Activated CD4-positive, alpha-beta T cell treated with anti-CD3 and anti-CD28 coated beads, Interleukin-2, amount 10 ng/mL, durations not matched to agents 24 days and 14 days (primary cell): ENCODE measurements at regions of chr5 and their contacts with region 1.

Region 1: GRCh38 chr5:159412284-159413046 is 82.2 kb upstream of the IL12B start:
- DNase-seq: peak; percentile 94
- H3K4me3 Mint-ChIP-seq: peak overlapping the region; percentile 46
- H3K27ac Mint-ChIP-seq: peak overlapping the region; percentile 82
- H3K4me1 Mint-ChIP-seq: peaks cover 58% of the 10 kb centered on the region
- H3K27me3 Mint-ChIP-seq: peaks cover 12% of the 10 kb centered on the region

Region 2: GRCh38 chr5:159163027-159163700 is 249.3 kb before region 1 on chr5:
- intact Hi-C with region 1: loop called (anchors 5 kb)
- DNase-seq: no peak
- H3K4me3 Mint-ChIP-seq: peak overlapping the region; percentile 6
- H3K27ac Mint-ChIP-seq: peak overlapping the region; percentile 74
- H3K4me1 Mint-ChIP-seq: peaks cover 43% of the 10 kb centered on the region
- H3K27me3 Mint-ChIP-seq: no peaks in the 10 kb centered on the region

Region 3: DNA sequence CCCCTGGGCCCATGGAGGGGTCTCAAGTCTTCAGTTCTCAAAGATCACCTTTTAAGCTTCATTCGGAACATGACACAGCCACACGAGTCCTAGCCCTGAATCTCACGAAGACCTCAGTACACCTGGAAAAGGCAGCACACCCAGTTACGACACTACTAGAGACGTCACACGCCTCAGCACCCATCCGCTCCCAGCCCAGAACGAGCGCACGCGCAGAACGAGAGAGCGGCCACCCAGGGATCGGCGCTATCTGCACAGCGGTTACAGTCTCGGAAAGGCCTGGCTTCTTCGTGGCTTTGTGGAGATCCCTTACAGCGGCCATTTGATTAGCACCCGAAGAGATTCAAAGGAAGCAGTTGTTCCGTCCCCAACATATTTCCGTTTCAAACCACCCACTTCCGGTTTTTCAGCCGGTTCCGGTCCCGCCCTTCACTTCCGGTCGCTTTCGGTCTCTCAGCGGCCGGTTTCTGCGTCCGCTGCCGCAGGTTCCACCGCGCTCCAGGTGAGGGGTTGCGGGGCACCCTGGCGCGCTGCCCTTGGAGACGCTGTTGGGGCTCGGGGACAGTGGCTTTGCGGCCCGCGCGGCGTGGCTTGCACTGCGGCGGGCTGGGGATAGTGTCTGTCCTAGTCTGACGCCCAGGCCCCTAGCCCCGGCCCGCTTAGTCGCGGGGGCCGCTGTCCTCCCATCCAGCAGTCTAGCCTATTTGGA is 149.5 kb before region 1 on chr5 and contains the start of gene UBLCP1:
- intact Hi-C with region 1: loop called (anchors 5 kb)
- DNase-seq: peak; percentile 92
- H3K4me3 Mint-ChIP-seq: peak within 1 kb of the TSS; percentile 92
- H3K27ac Mint-ChIP-seq: peak within 1 kb of the TSS; percentile 97
- H3K4me1 Mint-ChIP-seq: peaks cover 24% of the 10 kb centered on the region
- H3K27me3 Mint-ChIP-seq: peaks cover 3% of the 10 kb centered on the region
- total RNA-seq, gene UBLCP1: 30.2 and 31.2 TPM in 2 replicates

Region 4: DNA sequence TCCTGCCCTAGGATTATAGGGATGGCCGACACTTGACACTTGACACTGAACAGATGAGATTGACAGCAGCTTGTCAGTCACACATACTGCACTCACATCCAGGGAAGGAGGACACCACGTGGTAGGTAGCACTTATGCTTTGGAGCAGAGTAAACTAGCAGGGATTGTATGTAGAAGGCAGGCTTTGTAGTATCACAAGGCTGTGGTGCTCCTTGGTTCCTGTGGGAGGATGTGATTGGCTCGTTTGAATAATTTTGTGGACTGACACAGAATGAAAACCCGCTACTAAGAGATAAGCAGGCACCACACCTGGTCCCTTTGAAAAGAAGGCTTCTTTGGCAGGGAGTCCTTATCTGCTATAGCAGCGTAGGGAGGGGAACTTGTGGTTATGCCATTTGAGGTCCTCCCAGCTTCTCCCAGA is 18.6 kb before region 1 on chr5:
- intact Hi-C with region 1: no loop called
- DNase-seq: no peak
- H3K4me3 Mint-ChIP-seq: no peak overlapping the region
- H3K27ac Mint-ChIP-seq: no peak overlapping the region
- H3K4me1 Mint-ChIP-seq: peaks cover 4% of the 10 kb centered on the region
- H3K27me3 Mint-ChIP-seq: peaks cover 31% of the 10 kb centered on the region

Region 5: GRCh38 chr5:159427180-159428012 is 14.9 kb after region 1 on chr5:
- intact Hi-C with region 1: loop called (anchors 2 kb)
- DNase-seq: peak; percentile 59
- H3K4me3 Mint-ChIP-seq: peak overlapping the region; percentile 9
- H3K27ac Mint-ChIP-seq: peak overlapping the region; percentile 8
- H3K4me1 Mint-ChIP-seq: peaks cover 40% of the 10 kb centered on the region
- H3K27me3 Mint-ChIP-seq: peaks cover 23% of the 10 kb centered on the region

Region 6: DNA sequence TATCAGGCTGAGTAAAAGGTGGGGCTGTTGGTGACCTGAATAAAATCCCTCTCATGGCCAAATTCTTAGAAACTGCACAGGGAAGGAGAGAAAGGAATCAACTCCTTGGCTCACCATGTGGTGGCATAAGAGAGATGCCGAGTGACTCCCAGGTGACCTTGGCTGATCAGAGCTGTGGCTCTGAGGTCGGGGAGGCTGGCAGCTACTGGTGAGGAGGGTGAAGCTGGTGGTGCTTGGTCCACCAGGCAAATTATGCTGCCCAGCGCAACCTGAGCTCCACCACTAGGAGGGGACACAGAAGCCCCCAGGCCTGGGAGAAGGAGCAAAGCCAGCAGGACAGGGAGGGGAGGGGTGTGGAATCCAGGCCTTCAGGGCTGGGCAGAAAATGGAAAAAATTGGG is 29.0 kb after region 1 on chr5:
- intact Hi-C with region 1: no loop called
- DNase-seq: no peak
- H3K4me3 Mint-ChIP-seq: no peak overlapping the region
- H3K27ac Mint-ChIP-seq: no peak overlapping the region
- H3K4me1 Mint-ChIP-seq: peaks cover 5% of the 10 kb centered on the region
- H3K27me3 Mint-ChIP-seq: peaks cover 64% of the 10 kb centered on the region

Region 7: DNA sequence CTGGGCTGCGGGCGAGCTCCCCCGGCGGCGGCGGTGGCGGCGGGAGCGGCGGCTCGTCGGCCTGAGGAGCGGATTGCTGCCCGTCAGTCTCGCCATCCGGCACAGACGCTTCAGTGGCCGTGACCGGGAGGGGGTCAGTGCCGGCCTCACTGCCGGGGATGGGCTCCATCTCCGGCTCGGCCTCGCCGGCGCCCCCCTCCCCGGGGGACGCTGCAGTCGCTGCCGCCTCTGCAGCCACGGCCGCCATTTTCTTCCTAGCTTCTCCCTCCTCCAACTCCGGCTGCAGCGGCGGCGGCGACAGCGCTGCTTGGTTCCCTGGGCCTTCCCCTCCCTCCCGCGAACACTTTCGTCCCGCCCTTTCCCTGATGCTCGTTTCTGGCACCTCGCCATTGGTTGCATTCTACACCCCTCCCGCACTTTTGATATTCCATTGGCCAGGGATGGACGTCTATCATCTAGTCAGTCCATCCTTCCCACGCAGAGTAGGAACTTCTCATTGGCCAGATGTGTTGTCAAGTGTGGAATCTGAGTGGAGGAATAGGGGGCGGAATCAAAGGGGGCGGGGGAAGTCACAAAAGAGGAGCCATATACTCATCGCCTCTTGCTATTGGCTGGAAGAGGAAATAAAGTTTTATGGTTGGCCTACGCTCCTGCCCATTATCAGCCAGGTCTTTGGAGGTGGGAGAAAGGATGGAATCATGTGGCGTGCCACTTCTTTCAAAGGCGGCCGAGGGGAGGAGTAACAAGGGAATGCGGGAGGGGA is 706.9 kb after region 1 on chr5 and contains the start of gene PWWP2A:
- intact Hi-C with region 1: loop called (anchors 10 kb)
- DNase-seq: peak; percentile 99
- H3K4me3 Mint-ChIP-seq: peak within 1 kb of the TSS; percentile 91
- H3K27ac Mint-ChIP-seq: peak within 1 kb of the TSS; percentile 96
- H3K4me1 Mint-ChIP-seq: peaks cover 14% of the 10 kb centered on the region
- H3K27me3 Mint-ChIP-seq: peaks cover 11% of the 10 kb centered on the region
- total RNA-seq, gene PWWP2A: 26.1 and 26.7 TPM in 2 replicates